ENCODE measurements at regions of chr13 and their contacts with region 1.

Region 1: DNA sequence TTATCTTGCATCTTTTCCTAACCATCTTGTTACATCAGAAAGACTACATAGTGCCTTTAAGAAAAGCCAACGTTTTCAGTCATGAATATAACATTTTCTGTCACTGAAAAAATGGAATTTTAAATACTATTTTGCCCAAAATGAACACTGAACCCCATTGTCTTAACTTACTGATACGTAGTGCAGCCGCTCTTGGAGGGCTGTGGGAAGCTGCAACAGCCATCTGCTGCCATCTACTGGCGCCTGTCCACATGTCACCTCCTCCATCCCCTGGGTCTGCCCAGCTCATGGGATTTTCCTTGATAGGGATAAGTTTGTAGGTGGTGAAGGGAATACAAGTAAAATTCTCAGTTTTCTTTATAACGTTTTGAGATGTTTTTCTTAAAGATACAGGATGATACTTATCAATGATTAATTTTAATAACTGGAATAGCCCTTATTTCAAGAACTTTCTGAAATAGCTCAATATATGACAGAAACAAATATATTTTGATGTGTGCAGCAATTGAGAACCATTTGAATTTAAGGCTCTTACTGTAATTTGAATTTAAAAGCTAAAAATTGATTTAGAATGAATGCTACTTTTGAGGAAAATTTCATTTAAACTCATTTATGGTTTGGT is 73.7 kb downstream of the GGACT start:
- DNase-seq: peak; percentile 52
- H3K4me3 Mint-ChIP-seq: no peak overlapping the region
- H3K27ac Mint-ChIP-seq: no peak overlapping the region
- H3K4me1 Mint-ChIP-seq: peaks cover 54% of the 10 kb centered on the region
- H3K27me3 Mint-ChIP-seq: peaks cover 7% of the 10 kb centered on the region

Region 2: GRCh38 chr13:99916366-99917103 is 598.4 kb before region 1 on chr13:
- intact Hi-C with region 1: loop called (anchors 1 kb)
- DNase-seq: peak; percentile 12
- H3K4me3 Mint-ChIP-seq: no peak overlapping the region
- H3K27ac Mint-ChIP-seq: no peak overlapping the region
- H3K4me1 Mint-ChIP-seq: peaks cover 38% of the 10 kb centered on the region
- H3K27me3 Mint-ChIP-seq: peaks cover 8% of the 10 kb centered on the region

Region 3: DNA sequence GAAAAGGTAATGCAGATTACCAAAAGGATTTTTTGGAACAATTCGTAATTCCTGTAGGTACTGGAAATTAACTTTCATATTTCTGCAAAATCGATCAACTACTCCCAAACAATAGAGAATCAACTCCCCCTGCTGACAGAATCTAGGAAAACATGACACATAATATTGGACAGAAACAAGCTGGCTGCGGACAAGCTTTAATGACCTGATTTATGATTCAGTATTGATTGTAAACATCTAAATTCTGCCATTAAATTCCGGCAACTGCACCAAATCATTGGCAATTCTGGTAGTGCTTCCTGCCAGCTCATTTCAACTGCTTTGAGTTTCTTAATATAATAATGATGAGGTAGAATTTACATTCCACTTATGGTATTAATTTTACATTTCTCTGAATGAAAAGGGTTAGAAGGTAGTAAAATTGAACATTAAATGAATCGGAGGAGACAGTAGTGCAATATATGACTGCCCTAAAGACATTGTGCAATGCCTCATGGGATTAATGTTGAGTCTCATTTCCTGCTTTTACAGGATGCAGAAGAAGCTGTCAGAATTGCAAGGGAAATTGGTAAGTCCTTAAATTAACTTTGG is 279.5 kb before region 1 on chr13:
- intact Hi-C with region 1: loop called (anchors 1 kb)
- DNase-seq: no peak
- H3K4me3 Mint-ChIP-seq: no peak overlapping the region
- H3K27ac Mint-ChIP-seq: no peak overlapping the region
- H3K4me1 Mint-ChIP-seq: peaks cover 15% of the 10 kb centered on the region
- H3K27me3 Mint-ChIP-seq: no peaks in the 10 kb centered on the region

Region 4: DNA sequence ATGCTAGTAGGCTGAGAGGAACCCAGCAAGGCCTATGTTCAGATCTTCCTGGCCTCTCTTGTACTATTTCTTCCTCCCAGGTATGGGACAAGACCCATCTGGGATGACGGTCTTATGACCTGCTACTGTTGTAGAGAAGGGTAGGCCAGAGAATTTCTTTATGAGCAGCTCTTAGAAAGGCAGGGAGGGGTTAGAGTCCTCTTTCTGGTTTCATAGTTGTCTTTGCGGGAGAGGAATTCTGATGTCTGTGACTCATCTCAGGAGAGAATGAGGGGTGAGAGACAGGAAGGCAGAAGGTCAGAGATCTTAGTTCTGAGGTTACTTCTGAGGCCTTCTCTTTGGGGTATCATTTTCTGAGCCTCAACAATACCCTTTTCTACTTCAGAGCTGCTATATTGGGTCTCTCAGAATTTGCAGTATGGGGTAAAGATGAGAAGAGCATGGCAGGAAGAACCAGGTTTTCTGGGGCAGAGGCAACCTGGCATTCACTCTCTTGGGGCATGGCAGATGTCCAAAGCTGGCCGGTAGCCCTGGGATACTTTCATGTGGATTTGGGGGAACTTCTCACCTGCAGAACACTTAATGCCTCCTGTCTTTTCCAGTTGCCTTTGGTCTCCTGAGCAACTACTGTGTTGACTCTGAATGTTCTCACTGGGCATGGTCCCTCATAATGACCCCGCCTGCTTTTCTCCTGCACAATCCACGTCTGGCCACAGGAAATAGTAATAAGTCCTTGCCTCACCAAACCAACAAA is 80.7 kb before region 1 on chr13:
- intact Hi-C with region 1: loop called (anchors 2 kb)
- DNase-seq: peak; percentile 16
- H3K4me3 Mint-ChIP-seq: peak overlapping the region; percentile 1
- H3K27ac Mint-ChIP-seq: peak overlapping the region; percentile 56
- H3K4me1 Mint-ChIP-seq: peaks cover 55% of the 10 kb centered on the region
- H3K27me3 Mint-ChIP-seq: no peaks in the 10 kb centered on the region

Measured in activated T-helper 1 cell treated with anti-CD3 and anti-CD28 coated beads, Interleukin-12 subunit alpha, Interleukin-12 subunit beta, Interleukin-2, Interleukin-4 antibody, amounts not matched to agents 30 ng/mL and 10 ng/mL and 1 ng/mL, durations not matched to agents 14 hours and 24 hours and 36 hours (primary cell).